SK-N-SH (cell line): ENCODE measurements at regions of chr11 and their contacts with region 1.

Region 1: GRCh38 chr11:7143908-7144307 is 55.1 kb downstream of the RBMXL2 start:
- DNase-seq: no peak
- H3K4me3 ChIP-seq: no peak overlapping the region
- H3K27ac ChIP-seq: no peak overlapping the region
- H3K4me1 ChIP-seq: no peaks in the 10 kb centered on the region
- H3K27me3 ChIP-seq: no peaks in the 10 kb centered on the region
- CTCF ChIP-seq: peak; percentile 54
- EP300 ChIP-seq: no peak
- RAD21 ChIP-seq: peak; percentile 84

Region 2: GRCh38 chr11:7154881-7155361 is 11.0 kb after region 1 on chr11:
- CTCF ChIA-PET with region 1: interaction called, 10 read pairs
- POLR2A ChIA-PET with region 1: no interaction called
- DNase-seq: peak; percentile 57
- H3K4me3 ChIP-seq: no peak overlapping the region
- H3K27ac ChIP-seq: peak overlapping the region in 1 of 2 experiments; percentile 76; a peak in 2 of 4 replicates
- H3K4me1 ChIP-seq: peaks cover 0 to 13% of the 10 kb centered on the region in 2 experiments; a peak in 2 of 4 replicates
- H3K27me3 ChIP-seq: no peaks in the 10 kb centered on the region
- CTCF ChIP-seq: no peak
- EP300 ChIP-seq: peak in 1 of 2 experiments; percentile 64; a peak in 2 of 4 replicates
- RAD21 ChIP-seq: no peak

Region 3: GRCh38 chr11:7257724-7258123 is 113.8 kb after region 1 on chr11:
- CTCF ChIA-PET with region 1: interaction called, 12 read pairs
- POLR2A ChIA-PET with region 1: no interaction called
- DNase-seq: no peak
- H3K4me3 ChIP-seq: no peak overlapping the region
- H3K27ac ChIP-seq: no peak overlapping the region
- H3K4me1 ChIP-seq: peaks cover 0 to 12% of the 10 kb centered on the region in 2 experiments; a peak in 1 of 4 replicates
- H3K27me3 ChIP-seq: no peaks in the 10 kb centered on the region
- CTCF ChIP-seq: no peak
- EP300 ChIP-seq: no peak
- RAD21 ChIP-seq: no peak

Region 4: DNA sequence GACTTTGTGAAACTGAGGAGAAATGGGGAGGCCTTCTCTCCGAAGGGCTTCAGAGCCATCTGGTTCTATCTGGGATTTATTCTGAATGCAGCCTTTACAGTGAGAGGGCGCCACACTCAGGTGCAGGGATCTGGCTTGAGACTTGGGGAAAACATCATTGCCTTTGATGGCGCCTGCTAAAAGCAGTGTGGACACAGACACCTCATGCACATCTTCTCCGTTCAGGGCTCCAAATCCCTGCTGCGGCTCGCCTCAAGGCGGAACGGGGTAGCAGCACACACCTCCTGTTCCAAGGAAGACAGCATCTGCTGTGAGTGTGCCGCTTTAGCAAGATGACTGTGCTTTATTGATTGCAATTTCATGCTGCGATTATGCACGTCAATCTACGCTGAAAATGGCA is 304.3 kb after region 1 on chr11:
- CTCF ChIA-PET with region 1: interaction called, 95 read pairs
- POLR2A ChIA-PET with region 1: no interaction called
- DNase-seq: no peak
- H3K4me3 ChIP-seq: no peak overlapping the region
- H3K27ac ChIP-seq: no peak overlapping the region
- H3K4me1 ChIP-seq: no peaks in the 10 kb centered on the region; a peak in 1 of 4 replicates
- H3K27me3 ChIP-seq: no peaks in the 10 kb centered on the region
- CTCF ChIP-seq: no peak
- EP300 ChIP-seq: no peak
- RAD21 ChIP-seq: 0 out of 2 replicates have a peak, but pooled peaks have one; percentile 28